HepG2 (cell line): ENCODE measurements at regions of chr11 and their contacts with region 1.

Region 1: DNA sequence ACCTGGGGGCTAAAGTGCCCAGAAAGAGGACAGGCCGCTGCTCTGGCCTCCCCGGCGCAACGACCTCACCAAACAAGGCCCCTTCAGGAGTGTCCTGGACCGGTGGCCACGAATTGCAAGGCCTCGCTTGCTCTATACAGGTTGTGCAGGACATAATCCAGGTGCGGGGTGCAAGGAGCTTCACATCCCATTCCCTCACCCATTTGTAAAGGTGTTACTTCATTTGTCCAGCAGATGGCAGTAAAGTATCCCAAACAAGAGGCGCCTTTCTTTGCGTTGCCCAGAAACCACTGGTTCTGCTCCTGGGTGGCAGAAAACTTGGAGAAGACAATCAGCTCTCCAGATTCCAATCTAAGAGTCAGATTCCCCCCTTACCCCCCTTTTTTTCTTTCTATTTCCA is 35.9 kb upstream of the PRDM11 start:
- DNase-seq: peak; percentile 72
- ATAC-seq: peak; percentile 77
- H3K4me3 ChIP-seq: no peak overlapping the region
- H3K27ac ChIP-seq: no peak overlapping the region
- H3K4me1 ChIP-seq: peaks cover 11% of the 10 kb centered on the region
- H3K27me3 ChIP-seq: peaks cover 0 to 4% of the 10 kb centered on the region in 2 experiments; a peak in 2 of 5 replicates
- CTCF ChIP-seq: peak; percentile 83
- EP300 ChIP-seq: no peak
- POLR2A ChIP-seq: no peak
- RAD21 ChIP-seq: peak; percentile 71

Region 2: GRCh38 chr11:45142241-45143055 is 31.9 kb after region 1 on chr11:
- CTCF ChIA-PET with region 1: no interaction called
- POLR2A ChIA-PET with region 1: no interaction called
- in situ Hi-C with region 1: no loop called
- intact Hi-C with region 1: no loop called
- DNase-seq: no peak
- ATAC-seq: no peak
- H3K4me3 ChIP-seq: no peak overlapping the region
- H3K27ac ChIP-seq: no peak overlapping the region
- H3K4me1 ChIP-seq: peaks cover 9% of the 10 kb centered on the region
- H3K27me3 ChIP-seq: peaks cover 2 to 39% of the 10 kb centered on the region in 2 experiments; a peak in 4 of 5 replicates
- CTCF ChIP-seq: no peak
- EP300 ChIP-seq: no peak
- POLR2A ChIP-seq: no peak
- RAD21 ChIP-seq: no peak

Region 3: GRCh38 chr11:45158198-45158731 is 47.7 kb after region 1 on chr11:
- CTCF ChIA-PET with region 1: no interaction called
- POLR2A ChIA-PET with region 1: no interaction called
- in situ Hi-C with region 1: no loop called
- intact Hi-C with region 1: no loop called
- DNase-seq: peak; percentile 35
- ATAC-seq: peak; percentile 88
- H3K4me3 ChIP-seq: peak overlapping the region in 1 of 3 experiments; percentile 7; a peak in 1 of 6 replicates
- H3K27ac ChIP-seq: no peak overlapping the region
- H3K4me1 ChIP-seq: peaks cover 46% of the 10 kb centered on the region
- H3K27me3 ChIP-seq: no peaks in the 10 kb centered on the region
- CTCF ChIP-seq: no peak; the same call in 1 of the 2 replicates
- EP300 ChIP-seq: no peak
- POLR2A ChIP-seq: no peak
- RAD21 ChIP-seq: no peak

Region 4: GRCh38 chr11:45180179-45180842 is 69.7 kb after region 1 on chr11:
- CTCF ChIA-PET with region 1: no interaction called
- POLR2A ChIA-PET with region 1: no interaction called
- in situ Hi-C with region 1: no loop called
- intact Hi-C with region 1: loop called (anchors 2 kb)
- DNase-seq: no peak
- ATAC-seq: peak; percentile 73
- H3K4me3 ChIP-seq: peak overlapping the region; percentile 24 to 71 (median 58); a peak in 5 of 6 replicates
- H3K27ac ChIP-seq: peak overlapping the region; percentile 74
- H3K4me1 ChIP-seq: peaks cover 16% of the 10 kb centered on the region
- H3K27me3 ChIP-seq: no peaks in the 10 kb centered on the region; a peak in 1 of 5 replicates
- CTCF ChIP-seq: peak; percentile 47
- EP300 ChIP-seq: no peak
- POLR2A ChIP-seq: no peak; a peak in 1 of 4 replicates
- RAD21 ChIP-seq: peak; percentile 16; the same call in 1 of the 2 replicates

Region 5: GRCh38 chr11:45233121-45233803 is 122.7 kb after region 1 on chr11:
- CTCF ChIA-PET with region 1: no interaction called
- POLR2A ChIA-PET with region 1: no interaction called
- in situ Hi-C with region 1: no loop called
- intact Hi-C with region 1: loop called (anchors 1 kb)
- DNase-seq: peak; percentile 47
- ATAC-seq: peak; percentile 91
- H3K4me3 ChIP-seq: no peak overlapping the region
- H3K27ac ChIP-seq: no peak overlapping the region
- H3K4me1 ChIP-seq: no peaks in the 10 kb centered on the region
- H3K27me3 ChIP-seq: peaks cover 0 to 1% of the 10 kb centered on the region in 2 experiments; a peak in 1 of 5 replicates
- CTCF ChIP-seq: peak; percentile 78
- EP300 ChIP-seq: no peak
- POLR2A ChIP-seq: no peak
- RAD21 ChIP-seq: no peak; the same call in 1 of the 2 replicates

Region 6: DNA sequence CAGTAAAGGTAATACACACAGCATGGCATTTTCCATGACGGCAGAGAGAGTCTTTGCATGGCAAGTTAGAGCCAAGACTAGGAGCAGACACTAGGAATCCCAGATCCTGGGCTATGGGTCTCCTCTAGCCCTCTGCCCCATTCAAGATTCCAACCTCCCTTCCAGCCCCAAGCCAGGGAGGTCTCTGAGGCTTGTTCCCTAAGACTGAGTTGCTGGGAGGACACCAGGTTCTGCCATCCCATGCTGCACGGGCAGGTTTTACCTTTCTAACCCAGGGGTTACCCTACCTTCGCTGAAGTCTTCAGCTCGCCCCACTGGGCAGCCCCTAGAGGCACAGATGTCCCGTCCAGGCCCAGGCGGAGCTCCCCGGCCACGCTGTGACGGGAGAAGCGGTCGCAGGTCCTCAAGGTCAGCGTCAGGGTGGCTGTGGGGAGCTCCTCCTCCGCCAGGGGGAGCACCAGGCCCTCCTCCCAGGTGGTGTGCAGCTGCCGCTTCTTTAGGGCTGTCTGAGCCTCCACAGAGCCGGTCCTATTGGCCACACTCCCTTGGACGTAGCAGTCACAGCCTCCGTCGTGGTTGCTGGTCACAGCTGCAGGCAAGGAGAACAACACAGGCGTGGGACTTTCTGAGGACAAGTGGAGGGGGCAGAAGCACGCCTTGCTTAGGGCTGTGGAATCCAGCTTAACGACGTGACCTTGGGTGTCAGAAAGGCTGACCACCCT is 141.7 kb after region 1 on chr11:
- CTCF ChIA-PET with region 1: no interaction called
- POLR2A ChIA-PET with region 1: no interaction called
- in situ Hi-C with region 1: no loop called
- intact Hi-C with region 1: loop called (anchors 5 kb)
- DNase-seq: peak; percentile 35
- ATAC-seq: peak; percentile 99
- H3K4me3 ChIP-seq: no peak overlapping the region
- H3K27ac ChIP-seq: no peak overlapping the region
- H3K4me1 ChIP-seq: no peaks in the 10 kb centered on the region
- H3K27me3 ChIP-seq: peaks cover 2 to 21% of the 10 kb centered on the region in 2 experiments; a peak in 2 of 5 replicates
- CTCF ChIP-seq: peak; percentile 90
- EP300 ChIP-seq: no peak
- POLR2A ChIP-seq: no peak
- RAD21 ChIP-seq: peak; percentile 68

Region 7: DNA sequence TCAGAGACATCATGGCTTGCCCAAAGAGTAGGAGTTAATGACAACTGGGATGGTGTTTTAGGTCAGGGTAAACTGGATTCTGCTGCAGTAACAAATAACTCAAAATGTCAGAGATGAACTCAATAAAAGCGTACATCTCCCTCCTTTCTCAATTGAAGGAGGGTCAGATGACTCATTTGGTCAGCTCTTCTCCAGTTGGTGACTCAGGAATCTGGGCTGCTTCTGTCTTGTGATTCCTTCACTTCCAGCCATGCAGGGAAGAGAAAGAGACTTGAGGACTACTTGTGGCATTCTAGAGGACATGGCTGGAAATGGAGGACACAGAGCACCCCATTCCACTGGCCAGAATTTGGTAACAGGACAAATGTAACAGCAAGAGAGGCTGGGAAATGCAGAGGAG is 178.8 kb after region 1 on chr11:
- CTCF ChIA-PET with region 1: interaction called, 25 read pairs
- POLR2A ChIA-PET with region 1: no interaction called
- in situ Hi-C with region 1: no loop called
- intact Hi-C with region 1: loop called (anchors 1 kb)
- DNase-seq: no peak
- ATAC-seq: no peak
- H3K4me3 ChIP-seq: no peak overlapping the region
- H3K27ac ChIP-seq: no peak overlapping the region
- H3K4me1 ChIP-seq: no peaks in the 10 kb centered on the region
- H3K27me3 ChIP-seq: peaks cover 4 to 27% of the 10 kb centered on the region in 2 experiments; a peak in 4 of 5 replicates
- CTCF ChIP-seq: no peak
- EP300 ChIP-seq: no peak
- POLR2A ChIP-seq: no peak
- RAD21 ChIP-seq: no peak

Region 8: DNA sequence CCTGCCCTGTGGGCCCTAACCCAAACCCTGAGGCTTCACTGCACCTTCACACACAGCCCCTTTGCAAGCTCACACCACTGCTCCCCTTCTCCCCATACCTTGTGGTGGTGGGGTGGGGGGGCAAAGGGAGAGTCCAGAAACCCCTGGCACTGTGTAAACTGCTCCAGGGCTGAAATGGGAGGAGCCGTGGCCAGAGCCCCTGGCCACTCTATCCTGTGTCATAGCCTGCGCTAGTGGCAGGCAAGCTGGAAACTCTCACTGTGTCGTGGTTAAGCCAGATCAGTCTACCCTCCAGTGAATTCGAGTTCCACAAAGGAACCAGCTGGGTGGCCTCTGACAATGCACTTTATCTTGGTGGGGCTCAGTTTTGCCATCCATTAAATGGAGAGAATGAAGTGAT is 183.9 kb after region 1 on chr11:
- CTCF ChIA-PET with region 1: interaction called, 25 read pairs
- POLR2A ChIA-PET with region 1: no interaction called
- in situ Hi-C with region 1: no loop called
- intact Hi-C with region 1: loop called (anchors 1 kb)
- DNase-seq: no peak
- ATAC-seq: no peak
- H3K4me3 ChIP-seq: no peak overlapping the region
- H3K27ac ChIP-seq: no peak overlapping the region
- H3K4me1 ChIP-seq: no peaks in the 10 kb centered on the region
- H3K27me3 ChIP-seq: no peaks in the 10 kb centered on the region; a peak in 2 of 5 replicates
- CTCF ChIP-seq: no peak
- EP300 ChIP-seq: no peak
- POLR2A ChIP-seq: no peak
- RAD21 ChIP-seq: no peak

Region 9: GRCh38 chr11:45332276-45332934 is 221.8 kb after region 1 on chr11:
- CTCF ChIA-PET with region 1: interaction called, 22 read pairs
- POLR2A ChIA-PET with region 1: no interaction called
- in situ Hi-C with region 1: loop called (anchors 10 kb)
- intact Hi-C with region 1: loop called (anchors 1 kb)
- DNase-seq: peak; percentile 24
- ATAC-seq: peak; percentile 74
- H3K4me3 ChIP-seq: no peak overlapping the region
- H3K27ac ChIP-seq: no peak overlapping the region
- H3K4me1 ChIP-seq: no peaks in the 10 kb centered on the region
- H3K27me3 ChIP-seq: peaks cover 0 to 10% of the 10 kb centered on the region in 2 experiments; a peak in 2 of 5 replicates
- CTCF ChIP-seq: peak; percentile 66
- EP300 ChIP-seq: no peak
- POLR2A ChIP-seq: no peak
- RAD21 ChIP-seq: no peak

Region 10: DNA sequence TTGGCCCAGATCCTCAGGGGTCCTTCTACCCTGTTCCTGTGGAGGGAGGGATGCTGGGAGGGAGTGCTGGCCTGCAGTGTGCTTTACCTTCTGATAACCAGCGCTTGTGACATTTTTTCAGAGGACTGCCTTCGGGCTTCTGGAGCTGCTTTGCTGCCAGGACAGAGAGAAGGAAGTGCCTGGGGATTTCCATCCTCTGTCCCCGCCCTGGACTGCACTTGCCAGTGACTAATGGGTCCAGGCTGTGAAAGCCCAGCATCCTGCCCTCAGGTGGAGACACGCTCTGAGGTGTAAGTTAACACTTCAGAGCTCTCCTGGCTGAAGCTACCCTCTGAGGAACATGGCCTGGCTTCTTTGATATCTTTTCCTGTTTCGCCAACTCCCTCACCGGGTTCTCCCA is 334.2 kb after region 1 on chr11:
- CTCF ChIA-PET with region 1: no interaction called
- POLR2A ChIA-PET with region 1: no interaction called
- in situ Hi-C with region 1: no loop called
- intact Hi-C with region 1: no loop called
- DNase-seq: no peak
- ATAC-seq: no peak
- H3K4me3 ChIP-seq: no peak overlapping the region
- H3K27ac ChIP-seq: no peak overlapping the region
- H3K4me1 ChIP-seq: no peaks in the 10 kb centered on the region
- H3K27me3 ChIP-seq: peaks cover 2 to 14% of the 10 kb centered on the region in 2 experiments; a peak in 3 of 5 replicates
- CTCF ChIP-seq: no peak
- EP300 ChIP-seq: no peak
- POLR2A ChIP-seq: no peak
- RAD21 ChIP-seq: no peak

Region 11: DNA sequence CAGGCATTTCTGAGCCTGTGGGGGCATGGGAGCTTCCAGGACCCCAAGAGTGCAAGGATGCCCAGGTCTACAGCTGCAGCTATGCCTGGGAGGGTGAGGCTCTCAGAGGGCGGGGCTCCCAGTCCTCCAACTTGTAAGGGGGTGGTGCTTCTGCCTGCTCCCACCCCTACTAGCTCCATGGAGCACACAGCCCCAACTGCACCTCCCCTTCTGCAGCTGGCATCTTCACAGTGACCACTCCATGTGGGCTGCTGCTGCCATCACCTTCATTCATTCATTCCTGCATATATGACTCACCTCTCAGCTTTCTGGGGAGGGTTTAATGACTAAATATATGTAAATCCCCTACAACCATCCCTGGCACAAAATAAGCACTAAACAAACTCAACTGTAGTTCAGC is 511.0 kb after region 1 on chr11:
- CTCF ChIA-PET with region 1: no interaction called
- POLR2A ChIA-PET with region 1: no interaction called
- in situ Hi-C with region 1: no loop called
- intact Hi-C with region 1: no loop called
- DNase-seq: no peak
- ATAC-seq: no peak
- H3K4me3 ChIP-seq: no peak overlapping the region
- H3K27ac ChIP-seq: no peak overlapping the region
- H3K4me1 ChIP-seq: no peaks in the 10 kb centered on the region
- H3K27me3 ChIP-seq: no peaks in the 10 kb centered on the region; a peak in 1 of 5 replicates
- CTCF ChIP-seq: no peak
- EP300 ChIP-seq: no peak
- POLR2A ChIP-seq: no peak
- RAD21 ChIP-seq: no peak